ENCODE measurements at regions of chr9 and their contacts with region 1.

Region 1: DNA sequence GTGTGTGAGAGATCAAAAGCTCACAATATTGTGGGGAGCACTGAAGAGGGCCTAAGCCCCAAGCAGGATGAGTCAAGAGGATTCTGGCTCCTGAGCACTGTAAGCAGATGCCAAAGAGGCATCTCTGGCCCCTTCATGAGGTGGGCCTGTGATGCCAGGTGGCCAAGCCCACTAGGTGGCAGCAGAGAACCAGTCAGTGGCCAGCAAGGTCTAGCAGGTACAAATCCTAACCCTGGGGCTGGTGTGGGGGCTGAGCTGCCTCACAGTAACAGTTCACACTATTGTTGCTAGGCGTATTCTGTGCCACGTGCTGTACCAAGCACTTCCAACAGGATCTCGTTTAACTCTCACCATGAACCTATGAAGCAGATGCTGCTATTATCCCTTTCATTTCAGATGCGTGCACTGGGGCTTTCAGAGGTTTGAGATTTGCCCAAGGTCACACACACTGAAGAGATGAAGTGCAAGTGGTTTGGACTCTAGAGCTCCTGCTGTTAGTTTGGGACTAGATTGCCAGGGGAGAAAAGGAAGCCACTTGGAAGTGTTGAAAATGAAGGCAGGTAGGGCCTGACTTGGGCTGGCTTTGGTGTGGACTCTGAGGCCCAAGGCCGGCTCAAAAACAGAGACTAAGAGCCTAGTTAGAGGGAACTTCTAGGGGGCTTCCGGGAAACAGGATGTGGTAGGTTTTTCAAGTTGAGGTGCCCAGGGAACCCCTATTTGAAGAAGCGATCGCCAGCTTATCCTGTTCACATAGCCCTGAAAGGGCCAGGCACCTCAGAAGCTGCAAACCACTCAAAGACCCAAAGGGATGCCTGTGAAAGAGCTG is 4.4 kb upstream of the MLANA start:
- DNase-seq: peak; percentile 89
- H3K4me3 Mint-ChIP-seq: no peak overlapping the region
- H3K27ac Mint-ChIP-seq: no peak overlapping the region
- H3K4me1 Mint-ChIP-seq: peaks cover 3% of the 10 kb centered on the region
- H3K27me3 Mint-ChIP-seq: no peaks in the 10 kb centered on the region

Region 2: GRCh38 chr9:5799314-5799713 is 87.0 kb before region 1 on chr9:
- CTCF ChIA-PET with region 1: interaction called, 6 read pairs
- POLR2A ChIA-PET with region 1: no interaction called
- intact Hi-C with region 1: loop called (anchors 1 kb)
- DNase-seq: no peak
- H3K4me3 Mint-ChIP-seq: no peak overlapping the region
- H3K27ac Mint-ChIP-seq: no peak overlapping the region
- H3K4me1 Mint-ChIP-seq: peaks cover 22% of the 10 kb centered on the region
- H3K27me3 Mint-ChIP-seq: no peaks in the 10 kb centered on the region

Region 3: GRCh38 chr9:5869315-5870019 is 16.9 kb before region 1 on chr9:
- CTCF ChIA-PET with region 1: interaction called, 19 read pairs
- POLR2A ChIA-PET with region 1: no interaction called
- intact Hi-C with region 1: no loop called
- DNase-seq: peak; percentile 62
- H3K4me3 Mint-ChIP-seq: no peak overlapping the region
- H3K27ac Mint-ChIP-seq: no peak overlapping the region
- H3K4me1 Mint-ChIP-seq: peaks cover 9% of the 10 kb centered on the region
- H3K27me3 Mint-ChIP-seq: no peaks in the 10 kb centered on the region

Region 4: DNA sequence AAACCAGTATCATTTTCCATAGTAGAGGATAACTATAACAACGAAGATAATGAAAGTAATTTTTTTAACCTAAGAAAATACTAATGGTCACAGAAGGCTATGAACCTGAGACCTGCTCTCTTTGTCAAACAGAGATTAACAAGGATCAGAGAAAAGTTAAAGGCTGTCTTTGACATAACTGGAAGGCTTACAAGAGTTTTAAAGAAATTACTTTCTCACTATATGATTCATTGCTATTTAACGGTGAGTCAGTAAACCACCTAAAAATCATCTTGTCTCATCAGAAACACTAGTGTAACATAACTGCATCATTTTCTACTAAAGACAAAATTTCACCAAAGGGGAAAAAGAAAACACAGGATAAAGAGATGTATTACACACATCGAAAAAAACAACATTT is 23.6 kb after region 1 on chr9:
- CTCF ChIA-PET with region 1: no interaction called
- POLR2A ChIA-PET with region 1: no interaction called
- intact Hi-C with region 1: no loop called
- DNase-seq: no peak
- H3K4me3 Mint-ChIP-seq: no peak overlapping the region
- H3K27ac Mint-ChIP-seq: peak overlapping the region; percentile 86
- H3K4me1 Mint-ChIP-seq: peaks cover 25% of the 10 kb centered on the region
- H3K27me3 Mint-ChIP-seq: no peaks in the 10 kb centered on the region

Region 5: GRCh38 chr9:5949103-5949699 is 62.9 kb after region 1 on chr9:
- CTCF ChIA-PET with region 1: interaction called, 15 read pairs
- POLR2A ChIA-PET with region 1: no interaction called
- intact Hi-C with region 1: no loop called
- DNase-seq: peak; percentile 35
- H3K4me3 Mint-ChIP-seq: no peak overlapping the region
- H3K27ac Mint-ChIP-seq: no peak overlapping the region
- H3K4me1 Mint-ChIP-seq: peaks cover 27% of the 10 kb centered on the region
- H3K27me3 Mint-ChIP-seq: no peaks in the 10 kb centered on the region

Region 6: DNA sequence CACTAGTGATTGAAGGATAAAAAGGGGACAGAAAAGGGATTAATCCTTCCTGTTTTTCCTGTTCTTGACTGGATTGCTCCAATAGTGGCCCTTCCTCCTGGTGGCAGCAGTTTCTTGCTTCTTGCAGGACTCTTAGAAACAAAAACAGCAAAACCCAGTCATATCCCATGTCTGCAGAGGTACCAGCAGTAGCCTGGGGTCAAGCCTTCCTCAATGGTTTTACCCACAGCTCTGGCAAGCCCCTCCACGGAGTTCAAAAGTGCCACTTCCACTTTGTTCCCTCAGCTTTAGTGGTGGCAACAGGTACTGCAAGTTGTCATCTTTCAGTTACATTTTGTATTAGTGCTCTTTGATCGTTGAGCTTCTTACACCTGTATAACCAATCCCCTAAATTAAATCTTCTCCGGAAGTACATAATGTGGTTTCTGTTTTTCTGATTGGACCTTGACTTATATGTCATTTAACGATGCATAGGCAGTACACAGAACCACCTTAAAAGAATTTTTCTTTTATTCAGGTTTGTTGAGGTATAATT is 137.8 kb after region 1 on chr9:
- CTCF ChIA-PET with region 1: interaction called, 11 read pairs
- POLR2A ChIA-PET with region 1: no interaction called
- intact Hi-C with region 1: no loop called
- DNase-seq: peak; percentile 36
- H3K4me3 Mint-ChIP-seq: peak overlapping the region; percentile 23
- H3K27ac Mint-ChIP-seq: no peak overlapping the region
- H3K4me1 Mint-ChIP-seq: peaks cover 4% of the 10 kb centered on the region
- H3K27me3 Mint-ChIP-seq: peaks cover 5% of the 10 kb centered on the region

Region 7: DNA sequence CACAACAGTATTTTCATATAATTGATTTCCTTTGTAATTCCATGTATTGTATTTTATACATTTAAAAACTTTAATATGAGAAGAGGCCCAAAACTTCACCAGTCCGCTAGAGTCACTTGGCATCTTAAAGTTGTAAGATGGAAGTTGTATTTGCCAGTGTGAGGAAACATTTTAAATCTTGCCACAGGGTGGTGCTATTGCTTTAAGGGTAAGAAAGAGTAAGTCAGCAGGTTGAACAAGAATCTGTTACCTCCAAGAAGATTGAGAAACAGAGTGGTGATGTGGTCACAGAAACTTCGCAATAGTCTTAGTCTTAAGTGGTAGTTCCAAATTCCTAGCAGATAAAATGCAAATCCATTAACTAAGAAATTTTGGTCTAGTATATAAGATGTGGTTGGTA is 168.9 kb after region 1 on chr9:
- CTCF ChIA-PET with region 1: interaction called, 166 read pairs
- POLR2A ChIA-PET with region 1: interaction called, 4 read pairs
- intact Hi-C with region 1: loop called (anchors 1 kb)
- DNase-seq: no peak
- H3K4me3 Mint-ChIP-seq: no peak overlapping the region
- H3K27ac Mint-ChIP-seq: no peak overlapping the region
- H3K4me1 Mint-ChIP-seq: peaks cover under 1% of the 10 kb centered on the region
- H3K27me3 Mint-ChIP-seq: no peaks in the 10 kb centered on the region

Region 8: GRCh38 chr9:6566409-6567139 is 680.2 kb after region 1 on chr9:
- CTCF ChIA-PET with region 1: no interaction called
- POLR2A ChIA-PET with region 1: no interaction called
- intact Hi-C with region 1: loop called (anchors 5 kb)
- DNase-seq: peak; percentile 80
- H3K4me3 Mint-ChIP-seq: no peak overlapping the region
- H3K27ac Mint-ChIP-seq: peak overlapping the region; percentile 88
- H3K4me1 Mint-ChIP-seq: peaks cover 24% of the 10 kb centered on the region
- H3K27me3 Mint-ChIP-seq: peaks cover 3% of the 10 kb centered on the region